Left ventricle myocardium superior (tissue), 1 donor: ENCODE measurements at regions of chr1 and their contacts with region 1.

Region 1: GRCh38 chr1:14113841-14114567 is 414.0 kb downstream of the PRDM2 start:
- DNase-seq: peak; percentile 58
- ATAC-seq: peak; percentile 75

Region 2: GRCh38 chr1:14083706-14084105 is 30.3 kb before region 1 on chr1:
- intact Hi-C with region 1: no loop called
- DNase-seq: no peak
- ATAC-seq: no peak

Region 3: DNA sequence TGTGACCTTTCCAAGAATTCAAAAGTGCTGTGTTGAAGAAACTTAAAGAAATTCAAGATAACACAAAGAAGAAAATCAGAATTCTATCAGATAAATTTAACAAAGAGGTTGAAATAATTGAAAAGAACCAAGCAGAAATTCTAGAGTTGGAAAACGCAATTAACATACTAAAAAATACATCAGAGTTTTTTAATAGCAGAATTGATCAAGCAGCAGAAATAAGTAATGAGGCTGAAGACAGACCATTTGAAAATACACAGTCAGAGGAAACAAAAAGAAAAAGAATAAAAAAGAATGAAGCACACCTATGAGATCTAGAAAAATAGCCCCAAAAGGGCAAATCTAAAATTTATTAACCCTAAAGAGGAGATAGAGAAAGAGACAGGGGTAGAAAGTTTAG is 266.4 kb after region 1 on chr1:
- intact Hi-C with region 1: no loop called
- DNase-seq: no peak
- ATAC-seq: no peak

Region 4: DNA sequence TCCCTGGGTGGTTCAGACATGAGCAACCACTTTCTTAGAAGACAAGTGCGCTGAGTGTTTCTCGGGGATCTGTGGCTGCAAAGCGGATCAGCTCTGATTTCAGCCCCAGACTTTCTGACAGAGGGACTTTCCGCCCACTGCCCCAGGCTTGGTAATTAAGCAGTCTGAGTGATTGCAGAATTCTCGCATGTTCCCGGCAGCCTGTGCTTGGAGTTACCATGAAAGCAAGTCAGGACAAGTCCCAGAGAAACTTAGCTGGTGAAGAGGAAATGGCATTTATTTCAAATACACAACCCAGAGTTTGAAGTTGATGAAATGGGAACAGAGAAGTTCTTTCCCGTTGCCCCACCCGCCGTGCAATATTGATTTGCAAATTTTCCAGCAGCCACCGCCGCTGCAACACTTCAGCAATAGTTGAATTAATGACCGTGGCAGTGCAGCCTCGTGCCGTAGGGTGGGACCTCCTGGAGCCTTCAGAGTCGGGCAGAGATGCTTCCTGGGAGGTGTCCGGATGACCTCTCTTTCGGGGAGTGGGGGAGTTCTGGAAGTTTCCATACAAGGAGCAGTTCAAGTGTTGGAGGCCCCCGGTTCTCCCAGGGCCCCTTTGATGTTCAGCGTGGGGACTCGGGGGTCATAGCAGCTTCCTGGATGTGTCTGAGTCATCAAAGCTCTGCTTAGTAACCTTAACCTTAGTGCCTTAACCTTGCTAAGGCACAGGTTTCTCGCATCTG is 619.2 kb after region 1 on chr1:
- intact Hi-C with region 1: loop called (anchors 5 kb)
- DNase-seq: no peak
- ATAC-seq: no peak